Right ventricle myocardium superior (tissue), 1 donor: ENCODE measurements at regions of chr1 and their contacts with region 1.

Region 1: DNA sequence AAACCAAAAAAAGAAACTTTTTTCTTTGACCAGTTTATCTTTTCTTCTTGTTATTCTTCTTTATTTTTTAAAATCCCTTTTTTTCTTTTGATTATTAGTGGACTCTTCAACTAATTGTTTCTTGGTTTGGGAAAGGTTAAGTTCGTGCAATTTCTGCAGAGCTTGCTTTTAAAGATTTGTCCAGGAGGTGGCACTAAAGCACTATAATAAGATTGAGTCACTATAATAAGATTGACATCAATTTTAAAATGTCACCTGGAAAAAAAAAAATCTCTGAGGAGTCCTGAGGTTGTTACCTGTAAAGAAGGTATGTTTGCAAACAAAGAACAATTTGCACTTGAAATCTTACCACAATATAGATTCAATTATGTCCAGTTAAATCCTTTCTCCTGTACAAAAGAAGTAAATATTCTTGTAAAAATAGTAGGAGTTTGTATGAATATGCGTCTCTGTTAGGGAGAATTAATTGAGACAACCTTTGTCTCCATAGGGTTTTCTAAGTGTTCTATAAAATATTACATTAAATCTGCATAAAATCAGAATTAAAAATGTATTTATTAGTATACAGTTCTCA is 166.7 kb downstream of the ADGRL4 start:
- DNase-seq: no peak
- ATAC-seq: peak; percentile 56

Region 2: DNA sequence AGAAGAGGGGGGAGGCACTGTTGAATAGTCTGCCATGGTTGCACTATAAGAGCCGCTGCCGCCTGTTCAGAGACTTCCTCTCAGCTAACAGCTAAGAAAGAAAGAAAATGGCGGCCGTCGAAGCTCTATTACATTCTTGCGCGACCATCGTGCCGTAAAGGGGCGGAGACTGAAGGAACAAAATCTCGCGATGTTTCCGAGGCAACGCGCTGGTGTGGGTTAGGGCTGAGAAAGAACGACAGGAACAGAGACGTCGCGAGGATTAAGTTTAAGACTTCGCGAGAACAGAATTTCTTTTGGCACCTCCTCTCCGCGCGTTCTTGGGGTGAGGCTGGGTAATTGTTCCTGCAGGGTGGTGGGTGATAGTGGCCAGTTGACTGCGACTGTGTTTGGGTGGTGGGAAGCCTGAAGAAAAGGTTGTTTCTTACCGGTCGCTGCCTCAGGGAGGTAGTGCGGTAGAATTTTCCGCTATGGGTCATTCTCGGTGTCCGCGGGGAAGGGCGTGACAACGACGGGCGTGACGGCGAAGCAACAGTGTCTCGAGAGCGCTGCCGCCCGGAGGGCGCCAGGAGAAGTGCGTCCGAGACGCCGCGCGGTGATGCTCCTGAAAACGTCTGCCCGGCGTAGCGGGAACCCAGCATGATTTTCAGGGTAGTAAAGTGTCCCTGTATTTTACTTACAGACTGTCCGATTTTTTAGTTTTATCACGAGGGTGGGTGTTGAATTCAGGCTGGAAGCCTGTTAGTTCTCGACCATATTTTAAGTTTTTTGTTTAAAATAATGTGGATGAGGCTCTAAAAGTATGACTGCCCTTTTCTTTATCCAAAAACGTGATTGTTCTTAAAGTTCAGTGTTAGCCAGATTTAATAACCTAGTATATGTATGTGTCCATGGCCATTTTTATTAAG is 860.6 kb before region 1 on chr1 and contains the start of gene FUBP1:
- intact Hi-C with region 1: no loop called
- DNase-seq: peak; percentile 95
- ATAC-seq: peak; percentile 94
- total RNA-seq, gene FUBP1: 47.9 TPM

Region 3: DNA sequence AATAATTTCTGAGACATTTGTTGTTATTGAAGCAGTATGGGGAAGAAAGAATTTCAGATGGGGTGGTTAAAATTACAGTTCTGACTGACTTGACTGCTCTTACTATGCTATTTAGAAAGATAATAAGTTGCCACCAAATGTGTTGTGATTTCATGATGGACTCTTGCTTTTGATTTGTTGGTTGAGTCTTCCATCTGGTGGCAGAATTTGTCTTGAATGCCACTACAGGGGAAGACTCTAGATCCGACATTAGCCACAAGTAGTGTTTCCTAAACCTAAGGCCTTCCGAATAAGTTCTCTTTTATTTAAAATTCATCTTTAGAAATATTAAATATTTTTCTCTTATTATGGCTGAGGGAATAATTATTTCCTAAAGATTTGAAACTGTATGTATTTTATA is 357.6 kb after region 1 on chr1:
- intact Hi-C with region 1: loop called (anchors 5 kb)
- DNase-seq: no peak
- ATAC-seq: no peak

Region 4: DNA sequence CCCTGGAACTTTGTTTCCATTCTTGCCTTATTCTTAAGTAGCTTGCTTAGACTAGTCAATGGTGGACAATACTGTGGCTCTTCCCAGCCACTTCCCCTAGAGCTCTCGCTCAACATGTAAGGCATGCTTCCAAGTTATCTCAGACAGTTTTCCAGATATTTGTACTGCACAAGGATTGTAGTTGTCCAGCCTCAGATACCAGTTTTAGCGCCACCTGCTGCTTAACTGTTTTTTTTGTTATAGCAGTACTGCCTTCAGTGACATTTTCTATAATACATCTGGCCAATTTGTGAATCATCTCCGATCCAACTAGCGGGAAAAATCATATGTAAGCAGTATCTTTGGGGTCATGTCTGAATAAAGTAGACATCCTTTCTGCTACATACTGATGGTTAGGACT is 513.4 kb after region 1 on chr1:
- intact Hi-C with region 1: loop called (anchors 10 kb)
- DNase-seq: no peak
- ATAC-seq: peak; percentile 49